GM10248 (cell line): ENCODE measurements at regions of chr15 and their contacts with region 1.

Region 1: GRCh38 chr15:89087830-89088604 is at the start of gene ABHD2:
- DNase-seq: peak; percentile 94
- CTCF ChIP-seq: no peak

Region 2: DNA sequence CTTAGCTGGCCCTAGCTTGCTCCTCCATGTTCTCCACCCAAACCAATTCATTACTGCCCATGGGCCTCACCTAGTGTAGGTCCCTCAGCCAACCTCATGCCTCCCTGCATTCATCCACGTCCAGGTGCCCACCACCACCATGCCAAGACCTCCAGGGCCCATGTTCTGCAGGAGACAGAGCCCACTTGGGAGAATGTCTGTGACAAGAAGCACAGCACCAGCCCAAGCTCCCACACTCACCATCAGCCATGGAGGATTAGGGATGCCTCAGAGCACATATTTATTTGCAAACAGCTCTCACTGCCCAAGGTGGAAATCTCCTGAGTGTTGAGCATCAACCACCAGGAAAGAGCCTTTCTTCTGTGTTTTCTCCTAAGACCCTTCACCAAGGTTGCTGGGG is 328.1 kb before region 1 on chr15:
- CTCF ChIA-PET with region 1: no interaction called
- POLR2A ChIA-PET with region 1: no interaction called
- DNase-seq: no peak
- CTCF ChIP-seq: no peak

Region 3: DNA sequence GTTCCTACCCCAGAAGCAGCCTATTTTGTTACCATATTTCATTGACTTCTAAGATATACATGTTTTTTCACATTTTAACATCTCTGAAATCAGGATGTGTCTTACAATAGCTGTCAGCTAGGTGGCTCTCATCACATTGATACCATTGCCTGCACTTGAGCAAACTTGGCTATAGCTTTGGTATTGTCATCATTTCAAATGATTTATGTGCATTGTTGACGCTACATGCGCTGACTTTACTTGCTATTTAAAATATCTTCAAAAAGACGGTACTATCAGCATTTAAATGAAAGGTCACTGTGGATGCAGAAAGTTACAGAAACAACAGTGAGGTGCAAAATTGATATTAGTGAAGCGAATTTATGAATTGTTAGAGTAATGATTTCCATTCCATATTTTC is 53.7 kb before region 1 on chr15:
- CTCF ChIA-PET with region 1: no interaction called
- POLR2A ChIA-PET with region 1: no interaction called
- DNase-seq: no peak
- CTCF ChIP-seq: peak; percentile 12

Region 4: GRCh38 chr15:89057504-89058133 is 30.4 kb before region 1 on chr15:
- CTCF ChIA-PET with region 1: interaction called, 39 read pairs
- POLR2A ChIA-PET with region 1: no interaction called
- DNase-seq: peak; percentile 83
- CTCF ChIP-seq: peak; percentile 98

Region 5: DNA sequence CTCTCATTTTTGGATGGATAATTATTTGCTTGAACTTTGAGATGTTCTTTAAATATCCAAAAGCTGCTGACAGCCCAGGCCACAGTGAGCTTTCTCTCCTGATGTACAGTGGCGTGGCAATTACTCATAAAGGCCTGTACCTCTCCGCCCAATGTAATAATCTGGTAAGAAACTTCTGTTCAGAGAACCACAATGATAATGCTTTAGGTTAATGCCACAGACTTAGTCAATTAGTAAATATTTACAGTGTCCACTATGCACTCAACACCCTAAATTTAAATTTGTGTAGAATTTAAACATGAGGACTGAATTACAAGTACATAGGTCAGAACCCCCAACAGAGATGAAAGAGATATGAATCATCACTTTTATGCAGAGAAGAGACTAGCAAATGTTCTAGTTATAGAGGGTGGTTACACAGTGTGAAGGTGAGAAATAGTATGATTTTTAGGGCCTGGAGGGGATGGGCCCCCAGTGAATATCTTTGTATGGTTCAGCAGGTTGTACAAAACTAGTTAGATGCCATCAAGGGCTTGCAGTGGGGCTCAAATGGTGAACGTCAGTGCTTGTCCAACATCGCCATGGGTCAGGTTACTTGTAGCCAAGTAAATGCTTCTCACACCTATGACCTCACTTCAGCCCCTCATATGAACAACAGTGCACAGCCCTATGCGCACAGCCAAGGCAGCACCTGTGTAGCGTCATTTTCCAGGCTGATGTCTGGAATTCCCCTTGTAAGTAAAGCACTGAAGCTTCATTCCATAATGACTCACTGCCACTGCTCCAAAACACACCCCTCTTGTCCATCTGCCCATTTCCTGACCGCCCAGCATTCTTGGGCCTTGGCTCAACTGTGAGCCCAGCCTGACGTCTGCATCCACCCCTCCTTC is 13.5 kb after region 1 on chr15:
- CTCF ChIA-PET with region 1: interaction called, 58 read pairs
- POLR2A ChIA-PET with region 1: interaction called, 4 read pairs
- DNase-seq: peak; percentile 19
- CTCF ChIP-seq: no peak

Region 6: GRCh38 chr15:89112341-89112971 is 24.4 kb after region 1 on chr15:
- CTCF ChIA-PET with region 1: interaction called, 19 read pairs
- POLR2A ChIA-PET with region 1: interaction called, 3 read pairs
- DNase-seq: peak; percentile 60
- CTCF ChIP-seq: no peak

Region 7: DNA sequence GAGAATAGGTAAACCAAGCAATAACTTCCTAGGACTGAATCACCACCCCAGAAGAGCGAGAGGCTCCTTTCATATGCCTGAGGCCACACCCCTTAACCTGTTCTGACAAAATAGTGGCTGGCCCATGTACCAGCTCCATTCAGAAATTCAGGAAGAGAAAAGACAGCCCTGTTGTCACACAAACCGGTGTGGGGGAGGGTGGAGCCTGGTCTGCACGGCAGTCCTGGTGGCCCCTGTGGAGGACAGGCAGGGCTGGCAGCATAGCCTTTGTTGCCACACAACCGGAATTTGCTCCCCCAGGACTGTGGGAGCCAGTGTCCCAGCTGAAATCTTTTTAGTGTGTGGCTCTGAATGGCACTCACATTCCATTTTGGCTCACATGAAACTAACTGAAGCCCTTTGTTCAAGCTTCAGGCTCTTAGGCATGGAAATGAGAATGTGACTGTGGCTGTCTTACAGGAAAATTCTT is 109.5 kb after region 1 on chr15:
- CTCF ChIA-PET with region 1: no interaction called
- POLR2A ChIA-PET with region 1: no interaction called
- DNase-seq: no peak
- CTCF ChIP-seq: no peak